ENCODE measurements at regions of chr1 and their contacts with region 1.

Region 1: DNA sequence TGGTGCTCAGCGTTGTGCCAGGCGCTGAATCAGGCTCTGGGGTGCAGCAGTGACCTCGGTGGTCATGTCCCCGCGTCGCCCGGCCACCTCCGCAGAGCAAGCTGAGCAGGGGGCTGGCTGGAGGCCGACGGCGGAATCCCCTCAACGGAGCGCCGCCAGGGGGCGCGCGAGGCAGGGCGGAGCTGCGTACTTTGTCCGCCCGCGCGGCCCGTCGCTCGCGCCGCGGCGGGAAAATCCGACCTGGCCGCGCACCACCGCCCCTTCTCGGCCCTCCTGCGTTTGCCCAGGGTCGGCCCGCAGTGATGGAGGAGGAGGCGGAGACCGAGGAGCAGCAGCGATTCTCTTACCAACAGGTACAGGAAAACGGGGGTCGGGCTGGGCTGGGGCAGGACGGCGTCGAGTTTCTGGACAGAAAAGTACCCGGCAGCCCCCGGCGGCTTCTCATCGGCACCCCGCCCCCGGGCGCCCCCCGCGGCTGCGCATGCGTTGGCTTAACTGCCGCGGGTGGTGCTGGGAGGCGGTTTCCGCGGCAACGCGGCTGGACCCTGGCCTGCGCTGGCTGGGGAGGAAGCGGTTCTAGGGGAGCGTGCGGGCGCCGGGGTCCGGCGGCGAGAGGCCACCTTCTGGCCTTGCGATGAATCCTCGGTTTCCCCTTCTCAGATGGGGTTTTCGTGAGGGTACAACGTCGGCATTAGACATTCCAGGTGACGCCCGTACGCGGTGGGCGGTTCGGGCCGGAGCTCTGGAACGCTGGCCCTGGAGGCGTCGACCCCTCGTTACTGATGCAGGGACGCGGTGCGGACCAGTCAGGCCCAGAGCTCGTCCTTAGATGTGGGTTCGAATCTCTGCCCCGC is at the start of gene CENPS:
- DNase-seq: peak; percentile 91
- ATAC-seq: peak; percentile 83
- H3K4me3 Mint-ChIP-seq: peak within 1 kb of the TSS; percentile 76
- H3K27ac Mint-ChIP-seq: peak within 1 kb of the TSS; percentile 92
- H3K4me1 Mint-ChIP-seq: peaks cover 22% of the 10 kb centered on the region
- H3K27me3 Mint-ChIP-seq: no peaks in the 10 kb centered on the region
- total RNA-seq, gene CENPS: 18.1 to 22.8 TPM

Region 2: GRCh38 chr1:9588551-9589143 is 841.8 kb before region 1 on chr1 and contains the start of gene TMEM201:
- CTCF ChIA-PET with region 1: no interaction called
- POLR2A ChIA-PET with region 1: no interaction called
- intact Hi-C with region 1: loop called in 1 of 2 experiments (anchors 1 kb)
- DNase-seq: peak; percentile 97
- ATAC-seq: peak; percentile 92
- H3K4me3 Mint-ChIP-seq: peak within 1 kb of the TSS; percentile 80
- H3K27ac Mint-ChIP-seq: peak within 1 kb of the TSS; percentile 79
- H3K4me1 Mint-ChIP-seq: peaks cover 26% of the 10 kb centered on the region
- H3K27me3 Mint-ChIP-seq: no peaks in the 10 kb centered on the region
- total RNA-seq, gene TMEM201: 14.6 to 15.1 TPM

Region 3: GRCh38 chr1:9957726-9958125 is 472.7 kb before region 1 on chr1:
- CTCF ChIA-PET with region 1: no interaction called
- POLR2A ChIA-PET with region 1: no interaction called
- intact Hi-C with region 1: loop called in 1 of 2 experiments (anchors 5 kb)
- DNase-seq: no peak
- ATAC-seq: no peak
- H3K4me3 Mint-ChIP-seq: no peak overlapping the region
- H3K27ac Mint-ChIP-seq: no peak overlapping the region
- H3K4me1 Mint-ChIP-seq: no peaks in the 10 kb centered on the region
- H3K27me3 Mint-ChIP-seq: no peaks in the 10 kb centered on the region

Region 4: DNA sequence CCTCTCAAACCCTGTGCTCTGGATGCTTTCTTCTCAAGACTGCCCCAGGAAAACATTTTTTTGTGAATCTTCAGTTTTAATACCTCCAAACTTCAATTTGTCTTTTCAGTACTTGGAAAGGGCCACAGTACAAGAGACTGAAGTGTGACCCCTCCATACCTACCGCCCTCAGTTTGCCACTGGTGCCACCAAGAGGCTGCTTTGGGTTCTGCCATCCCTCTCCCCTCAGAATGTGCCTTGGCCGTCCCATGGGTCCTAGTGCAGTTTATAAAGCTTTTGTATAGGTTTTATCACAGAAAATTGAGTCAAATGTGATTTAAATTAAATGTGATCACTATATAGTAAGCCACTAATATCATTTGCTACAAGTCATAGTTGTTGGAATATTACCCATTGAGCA is 92.4 kb before region 1 on chr1:
- CTCF ChIA-PET with region 1: no interaction called
- POLR2A ChIA-PET with region 1: no interaction called
- intact Hi-C with region 1: loop called in 1 of 2 experiments (anchors 2 kb)
- DNase-seq: peak; percentile 69
- ATAC-seq: peak; percentile 86
- H3K4me3 Mint-ChIP-seq: no peak overlapping the region
- H3K27ac Mint-ChIP-seq: no peak overlapping the region
- H3K4me1 Mint-ChIP-seq: no peaks in the 10 kb centered on the region
- H3K27me3 Mint-ChIP-seq: no peaks in the 10 kb centered on the region

Region 5: DNA sequence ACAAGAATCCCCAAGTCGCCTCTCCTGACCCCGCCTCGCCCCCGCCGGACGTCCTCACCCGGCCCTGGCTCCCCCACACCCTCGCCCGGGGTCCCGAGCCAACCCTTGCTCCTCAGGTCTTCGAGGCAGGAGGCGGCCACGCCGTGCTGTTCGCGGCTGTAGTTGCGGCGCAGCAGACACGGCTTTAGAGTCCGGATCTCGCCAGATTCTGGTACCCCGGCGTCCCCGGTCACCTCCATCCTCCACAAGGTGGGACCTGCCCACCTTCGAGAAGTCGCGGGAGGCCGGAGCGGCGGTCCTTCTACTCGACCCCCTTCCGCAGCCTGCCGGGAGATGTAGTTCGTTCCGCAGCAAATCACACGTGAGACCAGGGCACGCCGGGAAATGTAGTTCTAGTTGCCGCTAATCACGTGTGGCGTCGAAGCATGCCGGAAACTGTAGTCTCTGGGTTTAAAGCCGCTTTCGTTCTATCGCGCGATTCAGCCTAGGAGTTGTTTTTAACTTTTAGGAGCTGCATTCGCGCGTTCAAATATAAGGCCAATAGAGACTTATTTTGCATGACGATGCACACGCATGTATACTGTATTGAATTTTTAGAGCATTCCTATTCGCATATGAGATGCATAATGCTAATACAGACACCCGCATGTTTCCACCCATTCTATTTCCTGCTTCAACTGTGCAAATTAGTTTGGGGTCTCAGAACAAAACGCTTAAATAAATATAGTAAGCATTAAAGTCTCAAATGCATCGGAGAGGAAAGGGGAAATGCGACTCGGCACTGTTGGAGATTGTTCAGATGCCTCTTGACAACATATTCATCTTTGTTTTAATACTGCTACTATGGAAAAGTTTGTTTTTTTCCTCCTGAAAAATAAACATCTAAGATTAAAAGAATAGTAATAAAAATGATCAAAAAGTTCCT is 42.0 kb after region 1 on chr1 and contains the start of gene DFFA:
- CTCF ChIA-PET with region 1: interaction called, 7 read pairs
- POLR2A ChIA-PET with region 1: no interaction called
- intact Hi-C with region 1: loop called (anchors 1 to 2 kb)
- DNase-seq: peak; percentile 96
- ATAC-seq: peak; percentile 83
- H3K4me3 Mint-ChIP-seq: peak within 1 kb of the TSS; percentile 97
- H3K27ac Mint-ChIP-seq: peak within 1 kb of the TSS; percentile 92
- H3K4me1 Mint-ChIP-seq: peaks cover 38% of the 10 kb centered on the region
- H3K27me3 Mint-ChIP-seq: no peaks in the 10 kb centered on the region
- total RNA-seq, gene DFFA: 45.7 to 46.4 TPM

Region 6: DNA sequence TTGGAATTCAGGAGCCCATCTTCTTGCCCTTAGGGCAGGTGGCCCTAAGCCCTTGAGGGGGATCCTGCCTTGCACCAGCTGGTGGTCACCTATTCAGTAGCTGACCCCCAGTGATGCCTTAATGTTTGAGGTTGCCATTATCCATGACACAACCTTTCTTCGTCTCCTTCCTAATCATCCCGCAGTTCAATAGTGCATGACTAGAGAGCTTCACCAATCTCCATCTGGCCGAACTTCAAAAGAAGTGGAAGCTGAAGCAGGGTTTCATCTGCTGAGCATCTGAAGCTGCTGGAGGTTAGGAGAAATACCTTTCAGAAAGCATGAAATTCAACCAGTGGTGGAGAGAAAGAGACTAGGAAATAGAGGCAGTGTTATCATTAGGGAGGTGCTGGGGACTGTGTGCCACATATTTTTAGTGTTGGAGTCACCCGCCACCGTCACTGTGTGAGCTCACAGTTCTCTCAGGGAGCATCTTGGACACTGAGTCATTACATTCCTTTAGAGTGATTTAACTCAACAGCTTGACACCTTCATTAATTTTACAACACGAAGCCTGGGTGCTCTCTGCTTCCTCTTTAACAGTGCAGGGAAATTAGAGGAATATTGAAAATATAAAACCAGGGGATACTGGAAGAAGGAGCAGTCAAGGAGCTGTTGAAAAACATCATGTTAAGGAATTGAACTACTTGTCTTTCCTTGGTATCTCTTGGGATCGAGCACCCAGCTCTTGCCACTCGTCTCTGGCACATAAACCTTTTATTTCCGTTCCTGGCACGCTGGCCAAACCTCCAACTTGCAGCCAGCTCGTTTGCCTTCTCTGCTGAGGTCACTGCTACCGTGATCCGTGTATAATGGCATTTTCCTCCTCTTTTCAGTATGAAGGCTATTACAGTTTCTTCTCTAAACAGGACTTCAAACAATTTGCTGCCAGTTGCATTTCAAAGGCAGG is 97.9 kb after region 1 on chr1:
- CTCF ChIA-PET with region 1: no interaction called
- POLR2A ChIA-PET with region 1: no interaction called
- intact Hi-C with region 1: no loop called
- DNase-seq: no peak
- ATAC-seq: no peak
- H3K4me3 Mint-ChIP-seq: no peak overlapping the region
- H3K27ac Mint-ChIP-seq: no peak overlapping the region
- H3K4me1 Mint-ChIP-seq: peaks cover 14% of the 10 kb centered on the region
- H3K27me3 Mint-ChIP-seq: no peaks in the 10 kb centered on the region

Region 7: DNA sequence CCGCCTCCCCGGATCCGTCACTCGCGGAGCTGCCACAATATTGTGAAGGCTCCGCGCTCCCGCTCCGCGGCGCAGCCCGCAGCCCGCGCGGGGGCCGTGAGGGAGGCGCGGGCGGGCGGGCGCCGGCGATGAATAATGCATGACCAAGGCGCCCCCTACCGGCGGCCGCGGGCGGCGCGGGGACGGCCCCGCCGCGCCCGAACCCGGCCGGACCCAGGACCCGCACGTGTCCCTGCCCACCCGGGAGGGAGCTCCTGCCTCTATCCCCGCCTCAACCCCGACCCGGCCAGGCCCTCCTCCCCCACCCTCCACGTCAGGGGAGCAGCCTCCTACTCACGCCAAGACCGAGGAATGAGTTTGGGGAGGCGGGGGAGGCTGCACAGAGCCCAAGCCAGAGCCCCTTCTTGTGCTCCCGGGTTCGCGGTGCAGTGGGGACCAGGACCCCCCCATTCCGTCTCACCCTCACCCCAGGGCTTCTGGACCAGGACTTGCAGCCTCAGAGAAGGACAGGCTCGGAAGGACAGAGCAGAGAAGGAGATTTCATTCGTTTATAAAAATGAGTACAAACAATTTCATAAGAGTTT is 436.8 kb after region 1 on chr1:
- CTCF ChIA-PET with region 1: no interaction called
- POLR2A ChIA-PET with region 1: no interaction called
- intact Hi-C with region 1: loop called in 1 of 2 experiments (anchors 1 kb)
- DNase-seq: peak; percentile 77
- ATAC-seq: peak; percentile 84
- H3K4me3 Mint-ChIP-seq: peak overlapping the region; percentile 43
- H3K27ac Mint-ChIP-seq: no peak overlapping the region
- H3K4me1 Mint-ChIP-seq: peaks cover 12% of the 10 kb centered on the region
- H3K27me3 Mint-ChIP-seq: peaks cover 51% of the 10 kb centered on the region